Caco-2 (cell line): ENCODE measurements at regions of chr7 and their contacts with region 1.

Region 1: GRCh38 chr7:66643395-66643794 is 14.7 kb downstream of the KCTD7 start:
- DNase-seq: no peak
- H3K4me3 ChIP-seq: no peak overlapping the region
- H3K4me3 Mint-ChIP-seq: no peak overlapping the region
- H3K27ac Mint-ChIP-seq: no peak overlapping the region
- H3K4me1 ChIP-seq: peaks cover 22% of the 10 kb centered on the region
- H3K4me1 Mint-ChIP-seq: peaks cover 13% of the 10 kb centered on the region
- H3K27me3 ChIP-seq: no peaks in the 10 kb centered on the region
- H3K27me3 Mint-ChIP-seq: no peaks in the 10 kb centered on the region
- CTCF ChIP-seq: peak in 1 of 2 experiments; percentile 2

Region 2: DNA sequence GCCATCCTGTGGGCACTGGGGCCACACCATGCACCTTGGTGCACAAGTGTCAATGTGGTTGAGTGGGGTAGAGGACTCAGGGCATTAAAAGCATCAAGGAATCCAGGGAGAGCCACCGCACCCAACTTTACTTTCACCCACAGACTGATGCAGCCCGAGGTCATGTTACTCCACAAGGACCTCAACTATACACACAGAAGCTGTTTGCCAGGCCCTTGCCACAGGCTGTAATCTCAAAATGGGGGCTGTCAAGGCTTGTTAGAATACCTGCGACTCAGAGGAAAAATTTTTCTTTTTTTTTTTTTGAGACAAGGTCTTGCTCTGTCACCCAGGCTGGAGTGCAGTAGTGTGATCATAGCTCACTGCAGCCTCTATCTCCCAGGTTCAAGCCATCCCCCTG is 41.2 kb before region 1 on chr7:
- CTCF ChIA-PET with region 1: interaction called, 10 read pairs
- POLR2A ChIA-PET with region 1: no interaction called
- intact Hi-C with region 1: no loop called
- DNase-seq: no peak
- H3K4me3 ChIP-seq: no peak overlapping the region
- H3K4me3 Mint-ChIP-seq: no peak overlapping the region
- H3K27ac Mint-ChIP-seq: no peak overlapping the region
- H3K4me1 ChIP-seq: no peaks in the 10 kb centered on the region
- H3K4me1 Mint-ChIP-seq: no peaks in the 10 kb centered on the region
- H3K27me3 ChIP-seq: no peaks in the 10 kb centered on the region
- H3K27me3 Mint-ChIP-seq: no peaks in the 10 kb centered on the region
- CTCF ChIP-seq: no peak